Mammary epithelial cell (primary cell): ENCODE measurements at regions of chr3 and their contacts with region 1.

Region 1: GRCh38 chr3:39288300-39288808 is 8.5 kb upstream of the CX3CR1 start:
- DNase-seq: peak; percentile 78
- H3K4me3 ChIP-seq: no peak overlapping the region
- H3K27ac ChIP-seq: no peak overlapping the region
- H3K4me1 ChIP-seq: no peaks in the 10 kb centered on the region
- H3K27me3 ChIP-seq: no peaks in the 10 kb centered on the region
- CTCF ChIP-seq: peak; percentile 97 to 98

Region 2: GRCh38 chr3:39101022-39101689 is 187.2 kb before region 1 on chr3:
- CTCF ChIA-PET with region 1: interaction called, 4 read pairs
- dilution Hi-C with region 1: loop called (anchors 5 kb)
- in situ Hi-C with region 1: no loop called
- intact Hi-C with region 1: loop called (anchors 1 kb)
- DNase-seq: peak; percentile 16
- H3K4me3 ChIP-seq: no peak overlapping the region
- H3K27ac ChIP-seq: no peak overlapping the region
- H3K4me1 ChIP-seq: peaks cover 16% of the 10 kb centered on the region
- H3K27me3 ChIP-seq: no peaks in the 10 kb centered on the region
- CTCF ChIP-seq: peak; percentile 76 to 77

Region 3: DNA sequence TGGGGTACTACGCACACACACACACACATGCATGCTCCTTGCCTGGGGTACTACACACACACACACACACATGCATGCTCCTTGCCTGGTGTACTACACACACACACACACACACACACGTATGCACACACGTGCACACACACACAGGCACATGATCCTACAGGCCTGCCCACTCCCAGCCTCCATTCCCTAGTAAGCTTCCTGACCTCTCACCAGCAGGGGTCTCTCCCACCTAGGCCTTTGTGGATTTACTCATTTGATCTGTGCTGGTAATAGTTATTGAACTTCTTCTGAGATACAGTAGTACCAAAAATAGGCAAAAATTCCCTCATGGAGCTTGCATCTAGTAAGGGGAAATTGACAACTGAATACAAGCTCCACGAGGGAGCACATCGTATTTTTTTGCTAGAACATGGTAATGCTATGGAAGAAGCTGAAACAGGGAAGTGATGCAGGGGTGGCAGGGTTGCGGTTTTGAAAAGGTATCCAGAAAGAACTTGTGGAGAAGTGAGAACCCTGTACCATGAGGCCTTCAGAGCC is 161.8 kb before region 1 on chr3:
- CTCF ChIA-PET with region 1: interaction called, 7 read pairs
- dilution Hi-C with region 1: no loop called
- in situ Hi-C with region 1: no loop called
- intact Hi-C with region 1: loop called (anchors 1 kb)
- DNase-seq: peak; percentile 24
- H3K4me3 ChIP-seq: no peak overlapping the region
- H3K27ac ChIP-seq: no peak overlapping the region
- H3K4me1 ChIP-seq: peaks cover 14% of the 10 kb centered on the region
- H3K27me3 ChIP-seq: no peaks in the 10 kb centered on the region
- CTCF ChIP-seq: peak; percentile 28 to 67

Region 4: DNA sequence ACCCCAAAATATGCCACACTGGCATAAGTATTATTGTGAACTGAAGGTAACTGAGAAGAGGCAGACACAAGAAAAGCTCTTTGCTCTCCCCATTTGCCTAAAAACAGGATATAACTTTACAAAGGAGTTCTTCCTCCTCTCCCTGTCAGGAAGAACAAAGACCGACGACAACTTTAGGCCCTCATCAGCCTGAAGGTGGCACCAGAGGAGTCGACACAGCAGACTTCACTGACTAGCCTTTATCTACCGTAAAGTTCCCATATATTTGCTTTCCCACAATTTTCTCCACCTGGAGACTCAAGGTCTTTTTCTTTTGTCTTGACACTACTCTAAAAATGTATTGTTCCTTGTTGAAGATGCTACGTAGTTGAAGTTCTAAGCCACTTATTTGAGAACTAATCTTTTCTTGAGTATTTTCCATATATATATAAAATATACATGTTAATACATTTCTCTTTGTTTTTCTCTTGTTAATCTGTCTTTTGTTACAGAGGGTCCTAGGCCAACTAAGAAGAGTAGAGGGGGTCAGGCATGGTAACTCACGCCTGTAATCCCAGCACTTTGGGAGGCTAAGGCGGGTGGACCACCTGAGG is 79.8 kb before region 1 on chr3:
- CTCF ChIA-PET with region 1: interaction called, 5 read pairs
- dilution Hi-C with region 1: no loop called
- in situ Hi-C with region 1: loop called in 1 of 2 experiments (anchors 5 kb)
- intact Hi-C with region 1: loop called (anchors 1 kb)
- DNase-seq: peak; percentile 50
- H3K4me3 ChIP-seq: no peak overlapping the region
- H3K27ac ChIP-seq: no peak overlapping the region
- H3K4me1 ChIP-seq: no peaks in the 10 kb centered on the region
- H3K27me3 ChIP-seq: peaks cover 3% of the 10 kb centered on the region
- CTCF ChIP-seq: peak; percentile 65 to 81

Region 5: GRCh38 chr3:39372833-39373232 is 84.5 kb after region 1 on chr3:
- CTCF ChIA-PET with region 1: interaction called, 11 read pairs
- dilution Hi-C with region 1: loop called (anchors 5 kb)
- in situ Hi-C with region 1: no loop called
- intact Hi-C with region 1: loop called (anchors 1 kb)
- DNase-seq: peak; percentile 68
- H3K4me3 ChIP-seq: no peak overlapping the region
- H3K27ac ChIP-seq: no peak overlapping the region
- H3K4me1 ChIP-seq: peaks cover 6% of the 10 kb centered on the region
- H3K27me3 ChIP-seq: no peaks in the 10 kb centered on the region
- CTCF ChIP-seq: no peak

Region 6: DNA sequence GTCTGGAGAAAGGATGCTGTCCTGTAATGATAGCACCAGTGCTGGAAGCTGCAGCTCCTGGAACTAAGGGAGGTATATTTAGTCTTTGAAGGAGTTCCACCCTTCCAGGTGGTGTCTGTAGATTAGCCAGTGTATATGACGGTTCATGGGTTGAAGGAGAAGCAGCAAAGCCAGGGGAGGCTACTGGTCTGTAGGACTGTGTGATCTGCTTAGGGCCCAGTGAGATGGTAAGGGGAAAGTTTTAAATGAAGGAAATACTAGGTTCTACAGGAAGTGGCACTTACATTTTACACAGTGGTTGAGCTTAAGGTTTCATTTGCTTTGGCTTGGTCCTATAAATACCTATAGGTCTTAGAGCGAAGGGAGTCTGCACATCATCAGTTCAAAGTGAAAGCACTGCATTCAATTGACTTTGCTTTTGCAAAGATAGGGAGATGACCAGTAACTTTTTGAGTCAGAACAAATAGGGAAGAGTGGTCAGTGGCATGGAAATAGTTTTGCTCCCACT is 100.4 kb after region 1 on chr3:
- CTCF ChIA-PET with region 1: no interaction called
- dilution Hi-C with region 1: no loop called
- in situ Hi-C with region 1: no loop called
- intact Hi-C with region 1: no loop called
- DNase-seq: no peak
- H3K4me3 ChIP-seq: no peak overlapping the region
- H3K27ac ChIP-seq: no peak overlapping the region
- H3K4me1 ChIP-seq: peaks cover 7% of the 10 kb centered on the region
- H3K27me3 ChIP-seq: no peaks in the 10 kb centered on the region
- CTCF ChIP-seq: no peak